PC-3 (cell line): ENCODE measurements at regions of chr14 and their contacts with region 1.

Region 1: GRCh38 chr14:81990312-81990761 is 456.7 kb upstream of the SEL1L start:
- DNase-seq: peak; percentile 66
- ATAC-seq: no peak
- H3K4me3 ChIP-seq: no peak overlapping the region
- H3K27ac ChIP-seq: no peak overlapping the region
- H3K4me1 ChIP-seq: no peaks in the 10 kb centered on the region
- H3K27me3 ChIP-seq: no peaks in the 10 kb centered on the region
- CTCF ChIP-seq: peak; percentile 85

Region 2: GRCh38 chr14:81625343-81625742 is 365.0 kb before region 1 on chr14:
- CTCF ChIA-PET with region 1: no interaction called
- POLR2A ChIA-PET with region 1: no interaction called
- intact Hi-C with region 1: loop called (anchors 10 kb)
- DNase-seq: peak; percentile 55
- ATAC-seq: peak; percentile 35; the same call in 1 of the 2 replicates
- H3K4me3 ChIP-seq: no peak overlapping the region
- H3K27ac ChIP-seq: no peak overlapping the region
- H3K4me1 ChIP-seq: no peaks in the 10 kb centered on the region
- H3K27me3 ChIP-seq: 0 out of 2 replicates have a peak, but pooled peaks cover 14% of the 10 kb centered on the region
- CTCF ChIP-seq: peak; percentile 72

Region 3: DNA sequence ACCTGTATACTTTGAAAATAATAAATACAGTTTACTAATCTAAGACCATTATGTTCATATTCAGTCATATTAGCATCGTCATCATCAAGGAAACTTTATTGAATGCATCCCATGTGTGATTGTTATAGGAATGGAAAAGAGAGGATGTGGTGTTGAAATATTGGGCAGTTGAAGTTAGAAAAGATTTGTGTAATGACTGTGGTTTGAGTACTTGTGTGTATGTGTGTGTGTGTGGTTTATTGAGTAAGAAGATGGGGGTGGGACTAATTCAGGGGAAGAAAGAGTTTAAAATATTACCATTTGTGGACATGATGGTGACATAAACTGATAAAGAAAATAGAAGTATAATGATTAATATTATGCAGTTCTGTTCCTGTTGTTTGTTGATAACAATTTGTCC is 218.0 kb before region 1 on chr14:
- CTCF ChIA-PET with region 1: no interaction called
- POLR2A ChIA-PET with region 1: no interaction called
- intact Hi-C with region 1: no loop called
- DNase-seq: no peak
- ATAC-seq: no peak
- H3K4me3 ChIP-seq: no peak overlapping the region
- H3K27ac ChIP-seq: no peak overlapping the region
- H3K4me1 ChIP-seq: no peaks in the 10 kb centered on the region
- H3K27me3 ChIP-seq: no peaks in the 10 kb centered on the region
- CTCF ChIP-seq: no peak

Region 4: DNA sequence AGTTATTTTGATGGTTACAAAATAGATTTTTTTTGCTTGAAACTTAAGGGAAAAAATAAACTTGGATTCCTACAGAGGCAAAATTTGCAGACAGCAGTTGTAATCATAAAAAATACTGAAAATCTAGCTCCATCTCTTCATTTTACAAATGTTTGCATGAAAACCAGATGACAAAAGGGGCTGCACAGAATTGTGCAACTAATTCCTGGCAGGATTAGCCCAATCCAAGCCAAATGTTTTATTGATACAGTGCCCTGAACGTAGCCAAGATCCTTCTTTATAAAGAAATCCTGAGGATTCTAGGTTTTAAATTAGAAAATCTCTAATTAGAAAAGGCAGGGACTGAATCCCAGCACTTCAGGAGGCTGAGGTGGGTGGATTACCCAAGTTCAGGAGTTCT is 100.3 kb before region 1 on chr14:
- CTCF ChIA-PET with region 1: no interaction called
- POLR2A ChIA-PET with region 1: no interaction called
- intact Hi-C with region 1: no loop called
- DNase-seq: no peak
- ATAC-seq: no peak
- H3K4me3 ChIP-seq: no peak overlapping the region
- H3K27ac ChIP-seq: no peak overlapping the region
- H3K4me1 ChIP-seq: no peaks in the 10 kb centered on the region
- H3K27me3 ChIP-seq: no peaks in the 10 kb centered on the region
- CTCF ChIP-seq: no peak

Region 5: DNA sequence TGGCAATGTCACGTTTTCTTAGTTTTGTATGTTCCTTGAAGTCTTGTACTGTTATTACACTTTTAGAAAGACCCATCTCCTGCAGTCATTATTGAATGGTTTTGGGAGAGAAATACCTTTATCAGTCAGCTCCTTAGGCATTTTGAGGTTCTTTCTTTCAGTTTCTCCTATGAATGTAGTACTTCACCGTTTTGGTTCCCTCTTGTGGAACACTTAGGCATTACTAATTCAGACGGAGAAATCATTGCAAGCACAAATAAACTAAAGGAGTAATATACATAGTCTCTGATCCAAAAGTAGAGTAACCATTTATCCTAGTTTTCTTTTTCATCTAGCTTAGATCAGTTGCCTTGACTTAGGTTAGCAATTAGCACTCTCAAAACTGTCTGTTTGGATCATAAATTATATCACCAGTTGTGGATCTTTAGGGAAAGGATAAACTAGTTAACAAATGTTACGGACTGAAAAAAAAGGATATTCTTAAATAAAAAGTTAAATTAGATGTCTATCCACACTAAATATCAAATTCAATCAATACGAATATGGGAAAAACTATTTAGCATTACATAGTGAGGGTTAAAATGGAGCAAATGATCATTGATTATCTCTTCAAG is 1081.7 kb after region 1 on chr14:
- CTCF ChIA-PET with region 1: no interaction called
- POLR2A ChIA-PET with region 1: no interaction called
- intact Hi-C with region 1: loop called (anchors 2 kb)
- DNase-seq: peak; percentile 50
- ATAC-seq: no peak
- H3K4me3 ChIP-seq: no peak overlapping the region
- H3K27ac ChIP-seq: no peak overlapping the region
- H3K4me1 ChIP-seq: no peaks in the 10 kb centered on the region
- H3K27me3 ChIP-seq: no peaks in the 10 kb centered on the region
- CTCF ChIP-seq: peak; percentile 47; the same call in 1 of the 2 replicates